ENCODE measurements at regions of chr17 and their contacts with region 1.

Region 1: GRCh38 chr17:50626037-50626574 is 8.6 kb upstream of the ABCC3 start:
- DNase-seq: peak; percentile 93
- H3K4me3 ChIP-seq: no peak overlapping the region; a peak in 1 of 4 replicates
- H3K27ac ChIP-seq: no peak overlapping the region
- H3K4me1 ChIP-seq: peaks cover 3 to 40% of the 10 kb centered on the region in 2 experiments; a peak in 3 of 4 replicates
- H3K27me3 ChIP-seq: no peaks in the 10 kb centered on the region
- CTCF ChIP-seq: peak; percentile 96
- EP300 ChIP-seq: no peak
- RAD21 ChIP-seq: peak; percentile 98

Region 2: GRCh38 chr17:49915670-49916069 is 710.4 kb before region 1 on chr17:
- CTCF ChIA-PET with region 1: no interaction called
- POLR2A ChIA-PET with region 1: no interaction called
- DNase-seq: no peak
- H3K4me3 ChIP-seq: no peak overlapping the region
- H3K27ac ChIP-seq: no peak overlapping the region
- H3K4me1 ChIP-seq: no peaks in the 10 kb centered on the region; a peak in 1 of 4 replicates
- H3K27me3 ChIP-seq: peaks cover 84% of the 10 kb centered on the region
- CTCF ChIP-seq: no peak
- EP300 ChIP-seq: no peak
- RAD21 ChIP-seq: no peak

Region 3: GRCh38 chr17:50478391-50479381 is 147.4 kb before region 1 on chr17 and contains the start of gene RSAD1:
- CTCF ChIA-PET with region 1: interaction called, 67 read pairs
- POLR2A ChIA-PET with region 1: interaction called, 3 read pairs
- DNase-seq: peak; percentile 98
- H3K4me3 ChIP-seq: peak within 1 kb of the TSS; percentile 80 to 90
- H3K27ac ChIP-seq: peak within 1 kb of the TSS; percentile 79 to 88
- H3K4me1 ChIP-seq: peaks cover 10 to 17% of the 10 kb centered on the region in 2 experiments; a peak in 2 of 4 replicates
- H3K27me3 ChIP-seq: no peaks in the 10 kb centered on the region
- CTCF ChIP-seq: peak; percentile 94
- EP300 ChIP-seq: peak; percentile 20 to 32; a peak in 2 of 4 replicates
- RAD21 ChIP-seq: peak; percentile 53
- polyA plus RNA-seq, gene RSAD1: 44.7 and 58.9 TPM in 2 replicates

Region 4: GRCh38 chr17:50575581-50576210 is 50.4 kb before region 1 on chr17:
- CTCF ChIA-PET with region 1: interaction called, 17 read pairs
- POLR2A ChIA-PET with region 1: no interaction called
- DNase-seq: no peak
- H3K4me3 ChIP-seq: no peak overlapping the region
- H3K27ac ChIP-seq: no peak overlapping the region
- H3K4me1 ChIP-seq: peaks cover 0 to 7% of the 10 kb centered on the region in 2 experiments; a peak in 1 of 4 replicates
- H3K27me3 ChIP-seq: peaks cover 8% of the 10 kb centered on the region
- CTCF ChIP-seq: 0 out of 2 replicates have a peak, but pooled peaks have one; percentile 18
- EP300 ChIP-seq: no peak
- RAD21 ChIP-seq: no peak

Region 5: DNA sequence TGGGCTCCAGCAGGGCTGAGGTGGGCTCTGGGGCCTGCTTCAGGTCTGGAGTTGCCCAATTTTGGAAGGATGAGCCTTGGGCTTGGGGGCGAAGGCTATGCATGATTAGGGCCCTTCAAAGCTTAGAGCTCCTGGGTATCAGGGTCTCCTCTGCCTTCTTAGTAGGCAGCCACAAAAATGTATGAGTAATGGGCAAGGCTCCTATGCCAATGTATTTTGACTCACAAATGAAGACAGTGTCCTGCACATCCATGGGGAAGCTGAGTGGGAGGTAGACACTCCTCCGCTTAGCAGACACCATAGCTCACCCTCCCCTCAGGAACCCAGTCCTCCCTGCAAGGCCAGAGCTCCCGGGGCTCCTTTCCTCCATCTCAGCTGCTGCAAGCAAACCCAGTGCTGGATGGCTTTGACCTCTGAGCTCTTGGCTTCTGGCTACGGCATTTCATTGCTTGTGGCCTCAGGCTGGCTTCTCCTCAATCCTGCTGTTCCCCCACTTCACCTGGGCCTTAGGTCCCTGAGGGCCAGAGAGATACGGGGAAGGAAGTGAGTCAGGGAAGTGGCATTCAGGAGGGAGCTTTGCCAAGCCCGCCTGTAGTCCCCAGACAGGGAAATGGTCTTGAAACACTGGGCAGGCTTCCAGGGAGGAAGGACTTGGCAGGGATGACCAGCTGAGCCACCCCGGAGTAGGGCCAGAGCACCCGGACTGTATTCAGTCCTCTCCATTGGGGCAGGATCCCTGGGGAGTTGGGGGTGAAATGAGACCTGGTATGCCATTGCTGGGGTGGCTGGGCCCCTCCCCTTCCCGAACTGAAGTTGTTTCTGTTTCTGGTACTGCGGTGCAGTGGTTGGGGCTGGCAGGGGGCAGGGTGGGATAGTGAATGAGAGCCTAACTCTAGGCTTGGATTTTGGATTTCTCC is 13.0 kb after region 1 on chr17:
- CTCF ChIA-PET with region 1: interaction called, 194 read pairs
- POLR2A ChIA-PET with region 1: no interaction called
- DNase-seq: peak; percentile 81
- H3K4me3 ChIP-seq: peak overlapping the region; percentile 4 to 43; a peak in 3 of 4 replicates
- H3K27ac ChIP-seq: peak overlapping the region; percentile 88 to 97
- H3K4me1 ChIP-seq: peaks cover 41 to 60% of the 10 kb centered on the region in 2 experiments; a peak in 3 of 4 replicates
- H3K27me3 ChIP-seq: no peaks in the 10 kb centered on the region
- CTCF ChIP-seq: no peak
- EP300 ChIP-seq: peak; percentile 65 to 94
- RAD21 ChIP-seq: peak; percentile 12; the same call in 1 of the 2 replicates

Region 6: GRCh38 chr17:50668025-50668837 is 42.1 kb after region 1 on chr17:
- CTCF ChIA-PET with region 1: interaction called, 130 read pairs
- POLR2A ChIA-PET with region 1: no interaction called
- DNase-seq: no peak
- H3K4me3 ChIP-seq: no peak overlapping the region
- H3K27ac ChIP-seq: peak overlapping the region in 1 of 2 experiments; percentile 42; a peak in 2 of 4 replicates
- H3K4me1 ChIP-seq: peaks cover 0 to 31% of the 10 kb centered on the region in 2 experiments; a peak in 3 of 4 replicates
- H3K27me3 ChIP-seq: no peaks in the 10 kb centered on the region
- CTCF ChIP-seq: no peak
- EP300 ChIP-seq: peak in 1 of 2 experiments; percentile 42; a peak in 1 of 4 replicates
- RAD21 ChIP-seq: no peak

Region 7: DNA sequence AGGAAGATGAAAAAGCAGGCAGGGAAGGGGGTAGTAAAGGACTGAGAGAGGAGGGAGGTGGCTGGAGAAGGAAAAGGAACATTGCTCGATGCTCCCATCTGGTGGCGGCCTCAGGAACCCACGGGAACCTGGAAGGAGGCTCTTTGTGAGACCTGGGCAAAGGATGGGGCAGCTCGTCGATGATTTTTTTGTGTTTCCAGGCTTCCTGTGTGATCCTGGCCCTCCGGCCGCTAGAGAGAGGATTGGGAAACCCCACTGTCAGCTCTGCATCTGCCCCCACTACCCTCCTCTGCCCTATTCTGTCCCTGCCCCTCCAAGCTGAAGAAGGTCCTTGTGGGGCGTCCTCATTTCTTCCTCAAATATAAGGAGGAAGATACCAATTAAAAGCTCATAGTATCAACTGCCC is 215.8 kb after region 1 on chr17:
- CTCF ChIA-PET with region 1: interaction called, 12 read pairs
- POLR2A ChIA-PET with region 1: no interaction called
- DNase-seq: peak; percentile 97
- H3K4me3 ChIP-seq: no peak overlapping the region; a peak in 1 of 4 replicates
- H3K27ac ChIP-seq: no peak overlapping the region
- H3K4me1 ChIP-seq: peaks cover 3 to 5% of the 10 kb centered on the region in 2 experiments; a peak in 2 of 4 replicates
- H3K27me3 ChIP-seq: no peaks in the 10 kb centered on the region
- CTCF ChIP-seq: peak; percentile 94
- EP300 ChIP-seq: no peak
- RAD21 ChIP-seq: peak; percentile 93

Measured in SK-N-SH (cell line).